Activated T-helper 2 cell treated with anti-CD3 and anti-CD28 coated beads, Interferon-gamma antibody, Interleukin-2, Interleukin-4, amounts not matched to agents 10 μg/mL and 5 μg/mL and 100 μg/mL, durations not matched to agents 14 hours and 24 hours and 36 hours (primary cell): ENCODE measurements at regions of chr1 and their contacts with region 1.

Region 1: GRCh38 chr1:153946622-153947241 is at the start of gene DENND4B:
- DNase-seq: peak; percentile 70
- H3K4me3 Mint-ChIP-seq: peak within 1 kb of the TSS; percentile 96
- H3K27ac Mint-ChIP-seq: peak within 1 kb of the TSS; percentile 95
- H3K4me1 Mint-ChIP-seq: peaks cover 22% of the 10 kb centered on the region
- H3K27me3 Mint-ChIP-seq: no peaks in the 10 kb centered on the region
- total RNA-seq, gene DENND4B: 124 TPM in 2 replicates

Region 2: DNA sequence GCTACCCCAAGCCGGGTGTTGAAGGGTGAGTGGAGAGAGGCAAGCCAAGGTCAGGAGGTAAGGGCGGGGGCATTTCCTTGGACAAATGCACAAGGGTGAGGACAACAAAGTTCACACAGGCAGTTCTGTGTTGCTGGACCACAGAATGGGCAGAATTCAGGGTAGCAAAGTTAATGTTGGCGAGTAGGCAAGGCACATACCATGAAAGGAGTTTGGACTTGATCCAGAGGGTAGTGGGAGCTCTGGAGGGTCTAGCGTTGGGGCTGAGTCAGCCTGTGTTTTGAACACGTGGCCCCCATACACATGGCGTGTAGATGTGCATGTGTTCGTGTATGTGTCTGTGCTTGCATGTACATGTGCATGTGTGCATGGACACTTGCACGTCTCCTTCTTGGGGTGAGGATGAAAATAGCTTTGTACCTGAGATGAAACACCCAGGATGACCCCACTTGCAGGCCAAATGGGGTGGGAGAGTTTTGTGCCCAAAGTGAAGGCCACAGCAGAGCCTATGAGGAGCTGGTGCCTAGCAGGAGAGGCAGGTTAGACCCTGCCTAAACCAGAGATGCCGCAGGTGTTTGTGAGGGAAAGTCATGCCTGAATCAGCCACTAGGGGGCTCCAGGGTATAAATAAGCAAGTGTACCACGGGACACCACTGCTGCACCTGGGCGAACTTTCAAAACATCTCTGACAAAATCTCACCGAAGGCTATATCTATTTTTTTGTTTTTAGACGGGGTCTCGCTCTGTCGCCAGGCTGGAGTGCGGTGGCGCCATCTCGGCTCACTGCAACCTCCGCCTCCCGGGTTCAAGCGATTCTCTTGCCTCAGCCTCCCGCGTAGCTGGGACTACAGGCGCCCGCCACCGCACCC is 149.7 kb before region 1 on chr1:
- intact Hi-C with region 1: loop called (anchors 2 kb)
- DNase-seq: peak; percentile 72
- H3K4me3 Mint-ChIP-seq: no peak overlapping the region
- H3K27ac Mint-ChIP-seq: no peak overlapping the region
- H3K4me1 Mint-ChIP-seq: peaks cover 7% of the 10 kb centered on the region
- H3K27me3 Mint-ChIP-seq: no peaks in the 10 kb centered on the region

Region 3: DNA sequence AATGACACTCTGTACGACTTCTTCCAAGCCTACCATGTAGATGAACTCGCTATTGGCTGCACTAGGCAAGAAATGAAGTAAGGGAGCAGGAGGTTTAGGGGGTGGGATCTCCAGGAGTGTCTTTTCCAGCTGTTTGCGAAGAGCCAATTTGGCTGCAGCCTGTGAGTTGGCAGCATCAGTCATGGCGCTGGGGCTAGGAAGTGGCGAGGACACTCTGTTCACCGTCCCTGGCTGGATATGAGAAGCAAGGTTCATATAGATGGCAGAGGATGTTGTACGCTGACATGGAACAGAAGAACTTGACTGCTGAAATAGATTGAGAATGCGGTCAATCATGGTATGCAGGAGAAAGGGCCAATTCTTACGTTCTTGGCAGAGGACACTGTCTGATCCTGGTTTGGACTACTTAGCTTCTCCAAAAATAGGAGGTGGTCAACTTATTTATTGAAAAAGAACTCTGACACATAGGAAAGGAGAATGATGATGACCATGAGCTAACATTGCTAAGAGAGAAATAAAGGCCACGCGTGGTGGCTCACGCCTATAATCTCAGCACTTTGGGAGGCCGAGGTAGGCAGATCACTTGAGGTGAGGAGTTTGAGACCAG is 130.3 kb before region 1 on chr1:
- intact Hi-C with region 1: loop called (anchors 1 kb)
- DNase-seq: no peak
- H3K4me3 Mint-ChIP-seq: no peak overlapping the region
- H3K27ac Mint-ChIP-seq: no peak overlapping the region
- H3K4me1 Mint-ChIP-seq: no peaks in the 10 kb centered on the region
- H3K27me3 Mint-ChIP-seq: no peaks in the 10 kb centered on the region

Region 4: GRCh38 chr1:153958111-153958960 is 11.6 kb after region 1 on chr1 and contains the start of gene CRTC2:
- intact Hi-C with region 1: loop called (anchors 1 kb)
- DNase-seq: peak; percentile 96
- H3K4me3 Mint-ChIP-seq: peak within 1 kb of the TSS; percentile 97
- H3K27ac Mint-ChIP-seq: peak within 1 kb of the TSS; percentile 94
- H3K4me1 Mint-ChIP-seq: peaks cover 51% of the 10 kb centered on the region
- H3K27me3 Mint-ChIP-seq: no peaks in the 10 kb centered on the region
- total RNA-seq, gene CRTC2: 71.6 and 79.1 TPM in 2 replicates

Region 5: GRCh38 chr1:153977250-153978240 is 30.8 kb after region 1 on chr1 and contains the start of gene JTB:
- intact Hi-C with region 1: loop called (anchors 2 kb)
- DNase-seq: peak; percentile 78
- H3K4me3 Mint-ChIP-seq: peak within 1 kb of the TSS; percentile 97
- H3K27ac Mint-ChIP-seq: peak within 1 kb of the TSS; percentile 97
- H3K4me1 Mint-ChIP-seq: peaks cover 27% of the 10 kb centered on the region
- H3K27me3 Mint-ChIP-seq: no peaks in the 10 kb centered on the region
- total RNA-seq, gene JTB: 148 and 152 TPM in 2 replicates

Region 6: GRCh38 chr1:153990468-153991150 is 43.9 kb after region 1 on chr1 and contains the start of gene RPS27:
- intact Hi-C with region 1: loop called (anchors 1 kb)
- DNase-seq: peak; percentile 88
- H3K4me3 Mint-ChIP-seq: peak within 1 kb of the TSS; percentile 88
- H3K27ac Mint-ChIP-seq: peak within 1 kb of the TSS; percentile 92
- H3K4me1 Mint-ChIP-seq: peaks cover 39% of the 10 kb centered on the region
- H3K27me3 Mint-ChIP-seq: no peaks in the 10 kb centered on the region
- total RNA-seq, gene RPS27: 1,296 and 1,372 TPM in 2 replicates

Region 7: GRCh38 chr1:154220071-154220969 is 273.6 kb after region 1 on chr1 and contains the start of gene UBAP2L:
- intact Hi-C with region 1: loop called (anchors 1 kb)
- DNase-seq: peak; percentile 99
- H3K4me3 Mint-ChIP-seq: peak within 1 kb of the TSS; percentile 93
- H3K27ac Mint-ChIP-seq: peak within 1 kb of the TSS; percentile 97
- H3K4me1 Mint-ChIP-seq: peaks cover 55% of the 10 kb centered on the region
- H3K27me3 Mint-ChIP-seq: no peaks in the 10 kb centered on the region
- total RNA-seq, gene UBAP2L: 259 and 263 TPM in 2 replicates